ENCODE measurements at regions of chr2 and their contacts with region 1.

Region 1: GRCh38 chr2:7427293-7428060 is 510.3 kb downstream of the RNF144A start:
- DNase-seq: peak; percentile 66
- ATAC-seq: no peak; the same call in 2 of the 3 replicates
- H3K4me3 ChIP-seq: no peak overlapping the region
- H3K27ac ChIP-seq: no peak overlapping the region
- H3K4me1 ChIP-seq: peaks cover 7% of the 10 kb centered on the region; the same call in 1 of the 2 replicates
- H3K27me3 ChIP-seq: peaks cover 0 to 25% of the 10 kb centered on the region in 2 experiments; a peak in 3 of 4 replicates
- CTCF ChIP-seq: peak; percentile 44 to 70 (median 70); a peak in 5 of 6 replicates
- EP300 ChIP-seq: no peak
- POLR2A ChIP-seq: no peak
- RAD21 ChIP-seq: peak; percentile 88

Region 2: DNA sequence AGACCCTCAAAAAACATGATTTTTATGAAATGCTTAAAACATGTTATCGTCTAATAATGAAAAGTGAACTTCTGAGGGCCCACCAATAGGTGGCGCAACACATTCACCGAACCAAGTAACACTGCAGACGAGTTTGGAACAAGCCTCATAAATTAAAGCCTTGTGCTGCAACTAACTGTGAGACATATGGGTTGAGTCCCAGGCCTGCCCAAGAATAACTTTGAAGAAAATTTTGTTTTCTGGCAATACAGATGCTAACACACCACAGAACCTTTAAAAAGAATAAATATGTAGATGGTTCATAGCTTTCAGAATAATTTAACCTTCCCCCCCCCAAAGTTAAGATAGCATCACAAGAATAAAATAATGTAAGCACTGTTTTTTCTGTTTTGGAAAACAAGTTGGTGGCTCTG is 224.4 kb before region 1 on chr2:
- CTCF ChIA-PET with region 1: interaction called, 8 read pairs
- POLR2A ChIA-PET with region 1: no interaction called
- RAD21 ChIA-PET with region 1: interaction called, 4 read pairs
- SMC1A ChIA-PET with region 1: interaction called, 14 read pairs
- in situ Hi-C with region 1: no loop called
- intact Hi-C with region 1: loop called (anchors 1 kb)
- DNase-seq: peak; percentile 16
- ATAC-seq: peak; percentile 86
- H3K4me3 ChIP-seq: no peak overlapping the region
- H3K27ac ChIP-seq: no peak overlapping the region
- H3K4me1 ChIP-seq: no peaks in the 10 kb centered on the region
- H3K27me3 ChIP-seq: no peaks in the 10 kb centered on the region
- CTCF ChIP-seq: peak; percentile 77 to 96 (median 88)
- EP300 ChIP-seq: no peak
- POLR2A ChIP-seq: no peak
- RAD21 ChIP-seq: peak; percentile 85

Region 3: GRCh38 chr2:7567646-7568045 is 140.2 kb after region 1 on chr2:
- CTCF ChIA-PET with region 1: interaction called, 7 read pairs
- POLR2A ChIA-PET with region 1: no interaction called
- RAD21 ChIA-PET with region 1: interaction called, 17 read pairs
- SMC1A ChIA-PET with region 1: interaction called, 19 read pairs
- in situ Hi-C with region 1: no loop called
- intact Hi-C with region 1: loop called (anchors 1 kb)
- DNase-seq: peak; percentile 39
- ATAC-seq: peak; percentile 94
- H3K4me3 ChIP-seq: no peak overlapping the region
- H3K27ac ChIP-seq: no peak overlapping the region
- H3K4me1 ChIP-seq: peaks cover 6% of the 10 kb centered on the region
- H3K27me3 ChIP-seq: no peaks in the 10 kb centered on the region; a peak in 1 of 4 replicates
- CTCF ChIP-seq: peak in 2 of 3 experiments; percentile 12 to 26; a peak in 2 of 6 replicates
- EP300 ChIP-seq: peak in 1 of 2 experiments; percentile 78; a peak in 2 of 4 replicates
- POLR2A ChIP-seq: no peak
- RAD21 ChIP-seq: no peak

Region 4: DNA sequence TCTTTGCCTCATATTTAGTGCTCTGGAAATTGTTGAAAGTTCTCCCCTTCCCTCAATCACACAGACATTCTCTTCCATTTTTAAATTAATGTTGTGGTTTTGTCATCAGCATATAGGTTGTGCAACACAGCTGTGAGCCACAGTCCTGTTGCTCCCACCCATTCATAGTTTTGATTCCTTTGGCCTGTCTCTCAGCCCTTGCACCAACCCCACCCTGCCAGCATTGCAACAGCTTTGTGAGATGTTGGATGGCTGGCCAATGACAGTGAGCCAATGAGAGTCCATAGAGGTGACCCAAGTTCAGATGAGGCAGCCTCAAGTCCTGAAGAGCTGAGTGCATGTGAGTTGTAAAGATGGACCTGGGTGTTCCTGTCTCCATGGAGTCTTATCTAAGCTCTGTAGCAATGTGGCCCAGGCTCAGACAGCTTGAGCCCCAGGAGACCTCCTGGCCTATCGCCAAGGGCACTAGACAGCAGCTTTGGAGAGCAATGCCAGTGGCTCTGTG is 265.2 kb after region 1 on chr2:
- CTCF ChIA-PET with region 1: interaction called, 6 read pairs
- POLR2A ChIA-PET with region 1: no interaction called
- RAD21 ChIA-PET with region 1: interaction called, 12 read pairs
- SMC1A ChIA-PET with region 1: interaction called, 15 read pairs
- in situ Hi-C with region 1: no loop called
- intact Hi-C with region 1: no loop called
- DNase-seq: no peak
- ATAC-seq: no peak
- H3K4me3 ChIP-seq: no peak overlapping the region
- H3K27ac ChIP-seq: no peak overlapping the region
- H3K4me1 ChIP-seq: 0 out of 2 replicates have a peak, but pooled peaks cover 4% of the 10 kb centered on the region
- H3K27me3 ChIP-seq: no peaks in the 10 kb centered on the region
- CTCF ChIP-seq: no peak
- EP300 ChIP-seq: no peak
- POLR2A ChIP-seq: no peak
- RAD21 ChIP-seq: no peak

Region 5: DNA sequence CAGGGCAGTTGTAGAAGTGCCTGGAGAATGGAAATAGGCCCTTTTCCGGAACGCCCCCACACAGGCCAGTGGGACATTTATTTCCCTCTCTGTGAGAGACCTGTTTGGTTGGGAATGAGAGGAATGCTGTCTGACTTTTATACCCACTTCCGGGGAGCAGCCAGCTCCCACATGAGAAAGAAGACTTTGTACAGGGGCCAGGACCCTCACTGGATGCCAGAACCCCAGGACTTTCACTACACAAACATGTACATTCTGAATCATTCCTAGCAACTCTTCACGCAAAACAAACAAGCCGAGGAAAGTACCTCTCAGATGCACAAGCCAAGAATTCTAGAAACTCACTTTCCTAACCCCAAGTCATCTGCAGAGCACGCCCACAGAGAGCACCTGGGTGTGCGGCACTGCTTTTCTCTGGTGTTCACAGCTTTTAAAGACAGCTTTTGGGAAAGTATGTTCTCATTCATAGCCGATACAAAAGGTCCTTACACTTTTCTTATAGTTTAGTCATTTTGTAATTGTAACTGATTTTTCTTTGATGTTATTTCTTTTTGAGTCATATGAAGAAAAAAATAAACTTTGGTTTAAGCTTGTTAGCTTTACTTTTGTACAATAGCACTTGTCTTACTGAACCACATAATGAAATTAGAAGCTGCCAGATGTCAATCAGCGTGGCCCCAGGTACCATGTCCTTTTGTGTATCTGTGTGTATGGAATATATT is 398.3 kb after region 1 on chr2:
- CTCF ChIA-PET with region 1: interaction called, 3 read pairs
- POLR2A ChIA-PET with region 1: no interaction called
- RAD21 ChIA-PET with region 1: interaction called, 3 read pairs
- SMC1A ChIA-PET with region 1: interaction called, 6 read pairs
- in situ Hi-C with region 1: no loop called
- intact Hi-C with region 1: loop called (anchors 5 kb)
- DNase-seq: peak; percentile 78
- ATAC-seq: peak; percentile 97
- H3K4me3 ChIP-seq: no peak overlapping the region
- H3K27ac ChIP-seq: peak overlapping the region; percentile 75
- H3K4me1 ChIP-seq: peaks cover 10% of the 10 kb centered on the region
- H3K27me3 ChIP-seq: no peaks in the 10 kb centered on the region
- CTCF ChIP-seq: no peak
- EP300 ChIP-seq: peak; percentile 94 to 98
- POLR2A ChIP-seq: no peak
- RAD21 ChIP-seq: peak; percentile 19; the same call in 1 of the 2 replicates

Region 6: DNA sequence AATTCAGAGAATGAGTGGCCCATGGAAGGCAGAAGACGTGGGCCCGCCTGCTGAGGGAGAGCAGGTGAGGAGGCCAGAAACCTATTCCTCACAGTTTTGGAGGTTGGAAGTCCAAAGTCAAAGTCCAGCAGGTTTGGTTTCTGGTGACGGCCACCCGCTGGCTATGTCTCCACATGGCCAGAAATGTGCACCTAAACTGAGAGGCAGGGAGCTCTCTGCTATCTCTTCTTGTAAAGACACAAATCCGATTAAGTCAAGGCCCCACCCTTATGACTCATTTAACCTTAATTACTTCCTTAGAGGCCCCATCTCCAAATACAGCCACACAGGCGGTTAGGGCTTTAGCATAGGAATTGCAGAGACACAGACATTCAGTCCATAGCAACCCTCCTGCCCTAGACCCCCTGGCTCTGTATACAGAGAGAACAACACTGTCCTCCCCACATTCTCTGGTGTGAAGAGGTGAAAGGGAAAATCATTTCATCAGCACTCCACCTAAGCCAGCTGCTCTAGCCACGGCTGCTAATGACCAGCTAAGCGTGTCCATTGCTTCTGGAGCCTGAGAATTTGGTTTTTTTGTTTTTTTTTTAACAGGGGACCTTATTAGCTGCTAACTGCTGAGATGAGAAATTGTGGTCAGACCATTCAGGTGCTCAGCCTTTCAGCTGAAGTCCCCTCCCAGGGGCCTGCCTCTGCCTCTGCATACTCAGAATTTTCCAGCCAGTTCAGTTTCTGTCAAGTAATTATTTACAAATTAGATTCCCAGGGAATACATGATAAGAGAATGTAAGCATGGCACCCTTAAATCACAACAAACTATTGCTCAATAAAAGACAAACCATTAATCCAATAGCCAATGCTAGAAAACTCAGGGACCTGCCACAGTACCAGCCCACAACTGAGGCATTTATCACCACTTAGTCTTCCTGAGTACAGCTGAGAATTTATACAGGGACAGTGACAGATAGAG is 885.7 kb after region 1 on chr2:
- CTCF ChIA-PET with region 1: interaction called, 6 read pairs
- POLR2A ChIA-PET with region 1: no interaction called
- RAD21 ChIA-PET with region 1: interaction called, 18 read pairs
- SMC1A ChIA-PET with region 1: interaction called, 11 read pairs
- in situ Hi-C with region 1: no loop called
- intact Hi-C with region 1: no loop called
- DNase-seq: peak; percentile 96
- ATAC-seq: peak; percentile 81
- H3K4me3 ChIP-seq: no peak overlapping the region; the same call in 1 of the 2 replicates
- H3K27ac ChIP-seq: peak overlapping the region; percentile 72
- H3K4me1 ChIP-seq: peaks cover 53% of the 10 kb centered on the region
- H3K27me3 ChIP-seq: no peaks in the 10 kb centered on the region
- CTCF ChIP-seq: no peak
- EP300 ChIP-seq: peak; percentile 46 to 86; a peak in 3 of 4 replicates
- POLR2A ChIP-seq: no peak
- RAD21 ChIP-seq: peak; percentile 29

Region 7: DNA sequence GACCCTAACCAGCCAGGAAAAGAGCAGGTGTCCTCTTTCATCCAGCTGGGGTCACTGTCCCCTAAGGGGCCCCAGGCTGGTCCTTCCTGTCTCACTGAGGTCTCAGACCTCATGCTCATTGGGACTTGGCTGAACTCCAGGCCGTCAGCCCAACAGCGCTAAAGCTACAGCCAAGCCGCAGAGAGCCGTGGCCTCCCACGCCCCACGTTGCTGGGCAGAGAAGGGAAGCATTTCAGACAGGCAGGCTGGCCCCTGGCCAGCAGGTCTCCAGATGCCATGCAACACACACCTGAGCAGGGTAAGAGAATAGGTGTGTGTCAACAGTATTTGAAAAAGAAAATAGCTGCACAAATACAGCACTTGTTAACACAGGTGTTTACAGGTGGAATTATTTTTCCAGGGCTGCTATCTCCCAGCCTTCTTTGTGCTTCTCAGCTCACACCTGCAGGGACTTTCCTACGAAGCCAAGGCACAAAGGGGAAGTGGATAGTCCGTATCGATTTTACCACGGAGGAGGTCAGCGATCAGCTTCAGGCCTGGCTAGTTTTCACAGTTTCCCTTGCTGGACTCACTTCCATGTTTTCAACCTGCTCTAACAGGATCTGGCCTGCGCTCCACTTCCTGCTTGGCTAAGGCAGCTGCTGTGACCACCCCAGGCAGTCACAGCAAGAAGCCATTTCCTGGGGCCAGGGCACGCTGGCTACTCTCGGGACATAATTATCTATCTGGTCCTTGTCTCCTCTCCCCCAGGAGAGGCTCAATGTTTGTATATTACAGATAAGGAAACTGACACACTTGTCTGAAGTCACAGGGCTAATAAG is 1098.3 kb after region 1 on chr2:
- CTCF ChIA-PET with region 1: interaction called, 18 read pairs
- POLR2A ChIA-PET with region 1: no interaction called
- RAD21 ChIA-PET with region 1: interaction called, 6 read pairs
- SMC1A ChIA-PET with region 1: interaction called, 10 read pairs
- in situ Hi-C with region 1: no loop called
- intact Hi-C with region 1: no loop called
- DNase-seq: peak; percentile 90
- ATAC-seq: peak; percentile 82
- H3K4me3 ChIP-seq: 0 out of 2 replicates have a peak overlapping the region, but pooled peaks have one; percentile 9
- H3K27ac ChIP-seq: peak overlapping the region; percentile 74
- H3K4me1 ChIP-seq: peaks cover 64% of the 10 kb centered on the region
- H3K27me3 ChIP-seq: no peaks in the 10 kb centered on the region
- CTCF ChIP-seq: peak; percentile 54 to 72 (median 58)
- EP300 ChIP-seq: peak in 1 of 2 experiments; percentile 80; a peak in 3 of 4 replicates
- POLR2A ChIP-seq: no peak
- RAD21 ChIP-seq: peak; percentile 88

Measured in GM12878 (cell line).